ENCODE measurements at regions of chr9 and their contacts with region 1.

Region 1: DNA sequence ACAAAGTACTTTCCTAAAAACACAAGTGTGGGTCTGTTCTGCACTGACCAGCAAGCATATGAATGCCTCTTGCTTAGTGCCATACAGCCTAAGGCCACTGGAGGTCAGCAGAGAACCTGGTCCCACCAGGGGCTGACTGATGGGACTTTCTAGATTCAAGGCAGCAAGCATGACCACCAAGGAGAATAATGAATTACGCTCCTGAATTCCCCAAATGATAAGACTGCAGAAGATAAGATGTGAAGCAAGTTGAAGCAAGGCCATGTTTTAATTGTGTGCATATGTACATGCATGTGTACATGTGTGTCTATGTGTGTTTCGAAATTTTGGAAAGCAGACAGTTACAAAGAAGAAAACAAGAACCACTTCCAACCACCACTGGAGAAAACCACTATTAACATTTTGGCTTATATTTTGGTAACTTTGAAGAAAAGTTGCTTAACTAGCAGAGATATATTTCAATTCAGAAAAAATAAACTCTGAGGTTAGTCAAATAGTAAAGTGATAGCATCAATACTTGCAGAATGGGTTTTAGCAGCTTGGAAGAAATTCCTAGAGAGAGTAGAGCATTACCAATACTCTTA is 70.5 kb downstream of the ERP44 start:
- DNase-seq: peak; percentile 67
- ATAC-seq: peak; percentile 93

Region 2: GRCh38 chr9:99796231-99796630 is 232.1 kb before region 1 on chr9:
- intact Hi-C with region 1: no loop called
- DNase-seq: no peak
- ATAC-seq: no peak

Region 3: DNA sequence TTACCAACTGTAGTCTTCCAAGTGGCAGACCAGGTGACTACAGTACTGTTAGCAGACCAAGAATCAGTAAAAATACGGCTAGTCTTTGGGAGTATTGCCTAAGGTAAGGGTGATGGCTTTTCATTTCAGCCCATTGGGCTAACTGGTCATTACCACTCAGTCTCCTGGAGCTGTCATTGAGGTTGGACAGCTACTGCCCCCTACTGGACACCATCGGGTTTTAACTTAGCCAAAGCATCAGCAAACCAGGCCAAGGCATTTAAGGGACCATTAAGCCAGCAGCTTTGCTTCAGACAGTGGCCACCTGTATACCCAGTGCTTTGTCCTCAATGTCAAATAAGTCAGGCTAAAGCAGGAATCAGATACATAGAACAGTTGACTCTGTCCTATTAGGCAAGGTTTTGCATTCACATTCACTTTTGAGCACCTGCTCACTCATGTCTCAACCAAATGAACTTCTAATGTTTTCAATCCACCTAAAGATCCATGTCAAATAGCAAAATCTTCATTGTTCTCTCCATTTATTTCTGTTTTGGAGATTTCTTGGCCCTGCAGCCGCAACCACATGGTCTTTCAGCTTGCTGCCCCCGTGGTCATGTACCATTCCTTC is 188.0 kb after region 1 on chr9:
- intact Hi-C with region 1: loop called in 1 of 2 experiments (anchors 5 kb)
- DNase-seq: peak; percentile 42
- ATAC-seq: peak in 1 of 2 donors; percentile 67

Measured in left cardiac atrium (tissue), 4 donors.